ENCODE measurements at regions of chr2 and their contacts with region 1.

Region 1: GRCh38 chr2:74482801-74483674 is at the starts of genes CCDC142 and TTC31:
- DNase-seq: peak; percentile 98 to 99
- H3K4me3 ChIP-seq: peak within 1 kb of the TSS; percentile 84 to 86
- H3K27ac ChIP-seq: peak within 1 kb of the TSS; percentile 83 to 95
- H3K4me1 ChIP-seq: peaks cover 0 to 35% (median 26%) of the 10 kb centered on the region in 4 donors
- H3K27me3 ChIP-seq: no peaks in the 10 kb centered on the region
- CTCF ChIP-seq: peak; percentile 79 to 88

Region 2: GRCh38 chr2:74454654-74455511 is 28.2 kb before region 1 on chr2 and contains the start of gene INO80B:
- intact Hi-C with region 1: loop called (anchors 2 kb)
- DNase-seq: peak; percentile 94 to 97
- H3K4me3 ChIP-seq: peak within 1 kb of the TSS; percentile 71 to 90
- H3K27ac ChIP-seq: peak within 1 kb of the TSS; percentile 80
- H3K4me1 ChIP-seq: peaks cover 0 to 34% (median 33%) of the 10 kb centered on the region in 4 donors
- H3K27me3 ChIP-seq: no peaks in the 10 kb centered on the region
- CTCF ChIP-seq: no peak

Region 3: DNA sequence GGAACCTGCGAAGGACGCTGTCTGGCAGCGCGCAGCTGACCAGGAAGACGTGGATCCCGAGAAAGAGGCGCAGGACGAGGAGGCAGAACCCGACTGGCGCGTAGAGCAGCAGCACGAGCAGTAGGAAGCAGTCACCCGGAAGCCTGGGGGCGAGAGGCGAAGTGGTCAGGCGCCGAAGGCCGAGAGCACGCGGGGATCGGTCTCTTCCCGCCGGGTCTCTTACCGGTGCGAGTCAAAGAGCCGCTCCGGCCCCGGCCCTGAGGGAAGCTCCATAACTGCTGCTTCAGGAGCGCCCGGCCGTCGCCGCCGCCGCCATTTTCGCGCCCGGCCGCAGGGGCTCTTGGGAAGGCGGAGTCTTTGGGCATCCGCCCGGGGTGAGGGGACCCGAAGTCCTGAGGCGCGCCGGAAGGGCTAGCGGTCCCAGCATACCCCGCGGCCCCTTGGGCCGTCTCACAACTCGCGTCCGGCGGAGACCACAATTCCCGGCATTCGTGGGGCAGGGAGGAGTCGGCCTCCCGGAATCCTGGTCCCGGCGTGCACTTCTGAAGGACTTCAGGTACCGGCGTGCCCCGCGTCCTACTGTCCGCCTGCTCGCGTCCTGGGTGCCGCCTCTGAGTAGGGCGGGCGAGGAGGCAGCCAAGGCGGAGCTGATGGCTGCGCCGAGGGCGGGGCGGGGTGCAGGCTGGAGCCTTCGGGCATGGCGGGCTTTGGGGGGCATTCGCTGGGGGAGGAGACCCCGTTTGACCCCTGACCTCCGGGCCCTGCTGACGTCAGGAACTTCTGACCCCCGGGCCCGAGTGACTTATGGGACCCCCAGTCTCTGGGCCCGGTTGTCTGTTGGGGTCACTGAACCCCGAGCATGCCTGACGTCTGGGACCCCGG is 46.6 kb after region 1 on chr2 and contains the starts of genes AUP1 and HTRA2:
- intact Hi-C with region 1: loop called (anchors 5 kb)
- DNase-seq: peak; percentile 98 to 99
- H3K4me3 ChIP-seq: peak within 1 kb of the TSS; percentile 78 to 98
- H3K27ac ChIP-seq: peak within 1 kb of the TSS; percentile 86
- H3K4me1 ChIP-seq: peaks cover 0 to 28% (median 25%) of the 10 kb centered on the region in 4 donors
- H3K27me3 ChIP-seq: no peaks in the 10 kb centered on the region
- CTCF ChIP-seq: peak in 1 of 2 experiments; percentile 26

Measured in tibial artery (tissue), 4 donors.